Panc1 (cell line): ENCODE measurements at regions of chr5 and their contacts with region 1.

Region 1: DNA sequence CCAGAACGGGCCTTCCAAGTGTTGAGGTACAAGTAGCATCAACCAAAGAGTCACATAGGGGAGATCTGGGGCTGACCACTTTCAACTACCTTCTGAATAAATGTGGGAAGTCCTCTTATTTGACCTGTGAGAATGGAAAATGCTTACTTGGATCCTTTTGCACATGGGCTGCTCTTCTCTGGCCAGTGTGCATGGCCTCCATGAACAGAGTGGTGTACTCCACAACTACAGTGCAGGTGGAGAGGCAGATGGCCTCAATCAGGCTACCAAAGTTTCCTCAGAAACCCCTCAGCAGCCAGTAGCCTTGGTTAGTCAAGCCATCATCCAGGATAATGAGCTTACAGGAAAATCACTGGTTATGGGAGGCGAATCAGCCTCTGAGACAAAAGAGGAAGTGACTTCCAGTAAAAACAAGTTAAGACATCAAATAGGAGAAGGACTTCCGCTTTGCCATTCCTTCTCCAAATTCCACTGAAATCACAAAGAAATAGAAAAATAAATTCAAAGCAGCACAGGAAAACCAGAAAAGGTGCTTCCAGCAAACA is 18.3 kb upstream of the FCHO2 start:
- DNase-seq: no peak
- ATAC-seq: no peak
- H3K4me3 ChIP-seq: no peak overlapping the region
- H3K27ac ChIP-seq: no peak overlapping the region
- H3K4me1 ChIP-seq: no peaks in the 10 kb centered on the region
- H3K27me3 ChIP-seq: no peaks in the 10 kb centered on the region
- CTCF ChIP-seq: no peak

Region 2: DNA sequence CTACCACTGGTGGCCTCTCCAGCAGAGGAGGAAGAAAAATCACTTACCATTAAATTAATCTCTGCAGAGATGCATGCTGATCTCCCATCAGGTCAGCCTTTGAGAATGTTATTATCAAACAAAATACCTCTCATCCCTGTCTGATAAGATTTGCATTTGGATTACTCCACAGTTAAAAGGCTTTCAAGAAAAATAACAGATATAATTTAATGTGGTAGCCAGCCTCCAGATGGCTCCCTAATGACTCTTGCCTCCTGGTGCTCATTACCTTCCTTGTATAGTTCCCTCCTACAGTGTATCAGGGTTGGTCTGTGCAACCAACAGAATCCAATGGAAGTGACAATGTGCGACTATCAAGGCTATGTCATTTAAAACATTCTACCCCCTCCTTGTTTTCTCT is 184.7 kb before region 1 on chr5:
- CTCF ChIA-PET with region 1: no interaction called
- POLR2A ChIA-PET with region 1: no interaction called
- in situ Hi-C with region 1: no loop called
- intact Hi-C with region 1: no loop called
- DNase-seq: no peak
- ATAC-seq: no peak
- H3K4me3 ChIP-seq: no peak overlapping the region
- H3K27ac ChIP-seq: no peak overlapping the region
- H3K4me1 ChIP-seq: no peaks in the 10 kb centered on the region
- H3K27me3 ChIP-seq: 0 out of 2 replicates have a peak, but pooled peaks cover 4% of the 10 kb centered on the region
- CTCF ChIP-seq: no peak

Region 3: DNA sequence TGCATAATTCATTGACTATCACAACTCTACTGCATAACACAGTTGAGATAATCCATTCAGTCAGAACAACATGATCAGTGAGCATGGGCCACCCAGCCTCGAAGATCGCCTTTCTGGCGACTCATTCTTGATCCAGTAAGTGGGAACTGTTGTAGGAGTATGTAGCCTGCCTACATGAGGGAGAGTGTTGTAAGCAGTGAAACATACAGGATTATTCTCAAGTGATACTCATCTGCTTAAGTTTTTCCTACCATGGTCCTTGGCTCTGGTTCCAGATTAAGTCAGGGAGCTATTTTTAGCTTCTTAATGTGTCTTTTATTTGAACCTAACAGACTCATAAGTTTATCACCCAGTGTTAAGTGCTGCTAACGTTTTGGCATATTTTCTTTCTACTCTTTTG is 77.1 kb before region 1 on chr5:
- CTCF ChIA-PET with region 1: no interaction called
- POLR2A ChIA-PET with region 1: no interaction called
- in situ Hi-C with region 1: no loop called
- intact Hi-C with region 1: no loop called
- DNase-seq: no peak
- ATAC-seq: no peak
- H3K4me3 ChIP-seq: no peak overlapping the region
- H3K27ac ChIP-seq: no peak overlapping the region
- H3K4me1 ChIP-seq: no peaks in the 10 kb centered on the region
- H3K27me3 ChIP-seq: no peaks in the 10 kb centered on the region
- CTCF ChIP-seq: no peak

Region 4: GRCh38 chr5:72959257-72959656 is 21.7 kb after region 1 on chr5:
- CTCF ChIA-PET with region 1: interaction called, 4 read pairs
- POLR2A ChIA-PET with region 1: interaction called, 10 read pairs
- in situ Hi-C with region 1: no loop called
- intact Hi-C with region 1: no loop called
- DNase-seq: no peak
- ATAC-seq: no peak
- H3K4me3 ChIP-seq: no peak overlapping the region
- H3K27ac ChIP-seq: no peak overlapping the region
- H3K4me1 ChIP-seq: peaks cover 12% of the 10 kb centered on the region; the same call in 1 of the 2 replicates
- H3K27me3 ChIP-seq: no peaks in the 10 kb centered on the region
- CTCF ChIP-seq: no peak

Region 5: GRCh38 chr5:73558950-73559349 is 621.4 kb after region 1 on chr5:
- CTCF ChIA-PET with region 1: no interaction called
- POLR2A ChIA-PET with region 1: no interaction called
- in situ Hi-C with region 1: no loop called
- intact Hi-C with region 1: no loop called
- DNase-seq: no peak
- ATAC-seq: peak; percentile 86
- H3K4me3 ChIP-seq: no peak overlapping the region
- H3K27ac ChIP-seq: no peak overlapping the region
- H3K4me1 ChIP-seq: peaks cover 2% of the 10 kb centered on the region; the same call in 1 of the 2 replicates
- H3K27me3 ChIP-seq: no peaks in the 10 kb centered on the region
- CTCF ChIP-seq: peak; percentile 30; the same call in 1 of the 2 replicates